HepG2 (cell line): ENCODE measurements at regions of chr17 and their contacts with region 1.

Region 1: GRCh38 chr17:8248751-8249607 is at the start of gene PFAS:
- DNase-seq: peak; percentile 87
- ATAC-seq: peak; percentile 59
- H3K4me3 ChIP-seq: peak within 1 kb of the TSS; percentile 74 to 100 (median 96)
- H3K27ac ChIP-seq: peak within 1 kb of the TSS; percentile 98
- H3K4me1 ChIP-seq: peaks cover 32% of the 10 kb centered on the region
- H3K27me3 ChIP-seq: no peaks in the 10 kb centered on the region; a peak in 1 of 5 replicates
- CTCF ChIP-seq: no peak
- EP300 ChIP-seq: peak in 1 of 2 experiments; percentile 58; a peak in 2 of 4 replicates
- POLR2A ChIP-seq: peak; percentile 88 to 89
- RAD21 ChIP-seq: no peak
- total RNA-seq, gene PFAS: 42.8 and 58.2 TPM in 2 replicates

Region 2: DNA sequence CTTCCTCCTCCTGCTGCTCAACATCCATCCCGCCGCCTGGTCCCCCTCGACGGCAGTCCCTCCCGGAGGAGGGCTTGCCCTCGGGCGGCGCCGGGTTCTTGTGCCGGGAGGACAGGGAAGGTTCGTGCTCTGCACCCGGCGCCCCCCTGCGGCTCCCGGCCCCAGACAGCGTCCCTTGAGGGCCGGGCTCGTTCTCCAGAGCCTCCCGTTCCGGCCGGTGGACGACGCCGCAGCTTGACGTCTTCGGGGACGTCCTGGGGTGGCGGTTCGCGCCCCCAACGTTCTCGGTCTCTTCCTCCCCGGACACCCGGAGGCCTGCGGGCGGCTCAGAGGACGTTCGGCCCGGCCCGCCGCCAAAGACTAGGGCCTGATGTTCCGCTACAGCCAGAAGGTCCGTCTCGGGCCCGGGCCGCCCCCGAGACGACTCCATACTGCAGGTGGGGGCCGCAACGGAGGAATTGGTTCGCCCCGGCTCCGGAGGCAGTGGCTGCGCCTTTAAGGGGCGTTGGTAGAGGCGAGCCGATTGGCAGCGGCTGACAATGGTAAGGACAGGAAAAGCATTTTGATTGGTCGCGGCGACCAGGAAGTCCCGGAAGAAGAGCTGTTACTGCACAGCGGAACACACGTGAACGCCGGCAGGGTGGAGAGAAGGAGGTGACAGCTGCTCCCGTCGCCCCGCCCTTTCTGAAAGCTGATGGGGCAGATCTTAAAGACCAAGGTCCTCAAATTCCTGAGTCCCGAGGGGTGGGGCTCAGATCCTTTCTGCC is 59.1 kb before region 1 on chr17 and contains the start of gene BORCS6:
- CTCF ChIA-PET with region 1: no interaction called
- POLR2A ChIA-PET with region 1: interaction called, 21 read pairs
- in situ Hi-C with region 1: no loop called
- intact Hi-C with region 1: no loop called
- DNase-seq: peak; percentile 95
- ATAC-seq: peak; percentile 67
- H3K4me3 ChIP-seq: peak within 1 kb of the TSS; percentile 74 to 92 (median 77)
- H3K27ac ChIP-seq: peak within 1 kb of the TSS; percentile 64
- H3K4me1 ChIP-seq: peaks cover 47% of the 10 kb centered on the region
- H3K27me3 ChIP-seq: no peaks in the 10 kb centered on the region; a peak in 1 of 5 replicates
- CTCF ChIP-seq: peak; percentile 47
- EP300 ChIP-seq: peak in 1 of 2 experiments; percentile 6; a peak in 1 of 4 replicates
- POLR2A ChIP-seq: peak; percentile 30 to 46; a peak in 2 of 4 replicates
- RAD21 ChIP-seq: peak; percentile 18; the same call in 1 of the 2 replicates
- total RNA-seq, gene BORCS6: 5.1 and 5.3 TPM in 2 replicates

Region 3: GRCh38 chr17:8237175-8237574 is 11.8 kb before region 1 on chr17:
- CTCF ChIA-PET with region 1: no interaction called
- POLR2A ChIA-PET with region 1: interaction called, 12 read pairs
- in situ Hi-C with region 1: no loop called
- intact Hi-C with region 1: no loop called
- DNase-seq: no peak
- ATAC-seq: no peak; the same call in 2 of the 3 replicates
- H3K4me3 ChIP-seq: no peak overlapping the region
- H3K27ac ChIP-seq: no peak overlapping the region
- H3K4me1 ChIP-seq: peaks cover 17% of the 10 kb centered on the region; the same call in 1 of the 2 replicates
- H3K27me3 ChIP-seq: no peaks in the 10 kb centered on the region
- CTCF ChIP-seq: no peak
- EP300 ChIP-seq: no peak
- POLR2A ChIP-seq: no peak
- RAD21 ChIP-seq: no peak

Region 4: DNA sequence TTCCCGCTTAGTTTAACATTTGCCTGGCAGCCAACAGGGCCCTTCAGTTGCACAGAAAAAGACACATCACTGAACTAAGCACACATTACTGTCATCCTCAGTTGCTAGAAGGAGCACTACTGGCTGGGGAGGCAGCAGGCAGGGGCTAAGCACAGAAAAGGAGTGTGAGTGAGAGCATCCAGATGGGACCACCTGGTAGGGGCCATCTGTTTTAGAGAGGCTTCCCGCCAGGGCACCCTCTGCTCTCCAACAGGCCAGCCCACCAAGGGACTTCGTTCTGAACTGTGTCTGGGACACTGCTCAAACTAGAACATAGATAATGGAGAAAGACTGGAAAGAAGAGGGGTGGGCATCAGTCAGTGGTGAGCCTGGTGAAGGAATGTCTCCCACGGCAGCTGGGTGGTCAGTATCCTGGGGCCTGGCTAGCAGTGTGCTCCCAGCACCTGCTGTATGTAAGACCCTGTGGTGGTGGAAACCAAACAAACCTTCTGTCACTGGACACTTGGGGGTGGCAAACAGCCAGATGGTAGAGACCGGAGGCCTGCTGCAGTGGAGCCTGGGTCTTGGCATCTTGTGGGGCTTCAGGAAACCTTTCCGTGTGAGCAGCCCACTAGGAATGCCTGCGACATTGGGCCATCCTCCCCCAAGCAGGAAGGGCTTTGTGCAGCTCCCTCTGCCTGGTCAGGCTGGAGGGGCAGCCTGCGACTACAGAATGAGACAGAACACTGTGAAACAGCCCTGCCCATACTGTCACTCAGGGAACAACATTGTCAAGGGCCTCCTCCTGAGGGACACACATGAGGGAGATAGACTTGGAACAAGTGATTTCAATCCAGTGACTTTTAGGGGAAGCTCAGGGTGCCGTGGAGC is 26.7 kb after region 1 on chr17:
- CTCF ChIA-PET with region 1: no interaction called
- POLR2A ChIA-PET with region 1: interaction called, 23 read pairs
- in situ Hi-C with region 1: no loop called
- intact Hi-C with region 1: no loop called
- DNase-seq: no peak
- ATAC-seq: peak; percentile 48
- H3K4me3 ChIP-seq: no peak overlapping the region; a peak in 1 of 6 replicates
- H3K27ac ChIP-seq: peak overlapping the region; percentile 81
- H3K4me1 ChIP-seq: peaks cover 54% of the 10 kb centered on the region
- H3K27me3 ChIP-seq: no peaks in the 10 kb centered on the region
- CTCF ChIP-seq: peak; percentile 28; the same call in 1 of the 2 replicates
- EP300 ChIP-seq: no peak
- POLR2A ChIP-seq: no peak
- RAD21 ChIP-seq: no peak

Region 5: GRCh38 chr17:8288336-8289102 is 39.5 kb after region 1 on chr17 and contains the start of gene RANGRF:
- CTCF ChIA-PET with region 1: no interaction called
- POLR2A ChIA-PET with region 1: interaction called, 20 read pairs
- in situ Hi-C with region 1: loop called (anchors 5 kb)
- intact Hi-C with region 1: no loop called
- DNase-seq: peak; percentile 77
- ATAC-seq: peak; percentile 87
- H3K4me3 ChIP-seq: peak within 1 kb of the TSS; percentile 76 to 86 (median 78)
- H3K27ac ChIP-seq: peak within 1 kb of the TSS; percentile 76
- H3K4me1 ChIP-seq: peaks cover 57% of the 10 kb centered on the region
- H3K27me3 ChIP-seq: no peaks in the 10 kb centered on the region
- CTCF ChIP-seq: no peak
- EP300 ChIP-seq: no peak
- POLR2A ChIP-seq: peak; percentile 59 to 86
- RAD21 ChIP-seq: no peak; the same call in 1 of the 2 replicates
- total RNA-seq, gene RANGRF: 18.6 and 21.3 TPM in 2 replicates

Region 6: DNA sequence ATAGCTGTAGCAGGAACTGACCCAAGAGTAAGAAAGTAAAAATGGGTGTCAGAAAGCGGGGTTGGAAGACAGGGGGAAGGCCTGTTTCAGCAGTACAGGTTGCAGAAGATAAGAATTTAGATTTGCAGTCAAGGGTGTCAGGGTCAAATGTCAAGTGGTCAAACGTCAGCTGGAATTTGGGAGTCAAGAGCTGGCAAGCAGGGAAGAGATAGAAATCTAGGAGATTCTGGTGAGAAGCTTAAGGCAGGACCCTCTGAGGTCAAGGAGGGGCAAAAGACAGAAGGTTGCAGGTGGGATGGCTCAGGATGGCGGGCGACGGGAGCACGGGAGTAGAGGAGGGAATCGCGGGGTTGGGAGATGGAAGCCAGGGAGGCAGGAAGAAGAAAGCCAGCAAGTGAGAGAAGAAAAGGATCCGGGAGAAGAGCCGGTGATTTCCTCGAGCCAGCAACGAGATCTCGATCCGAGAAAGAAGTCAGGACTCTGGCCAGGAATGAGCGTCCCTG is 45.9 kb after region 1 on chr17:
- CTCF ChIA-PET with region 1: no interaction called
- POLR2A ChIA-PET with region 1: interaction called, 41 read pairs
- in situ Hi-C with region 1: no loop called
- intact Hi-C with region 1: loop called (anchors 2 kb)
- DNase-seq: no peak
- ATAC-seq: peak; percentile 18
- H3K4me3 ChIP-seq: peak overlapping the region; percentile 60 to 79 (median 72)
- H3K27ac ChIP-seq: peak overlapping the region; percentile 88
- H3K4me1 ChIP-seq: peaks cover 45% of the 10 kb centered on the region
- H3K27me3 ChIP-seq: no peaks in the 10 kb centered on the region
- CTCF ChIP-seq: no peak
- EP300 ChIP-seq: no peak
- POLR2A ChIP-seq: peak in 1 of 2 experiments; percentile 67; a peak in 2 of 4 replicates
- RAD21 ChIP-seq: no peak

Region 7: DNA sequence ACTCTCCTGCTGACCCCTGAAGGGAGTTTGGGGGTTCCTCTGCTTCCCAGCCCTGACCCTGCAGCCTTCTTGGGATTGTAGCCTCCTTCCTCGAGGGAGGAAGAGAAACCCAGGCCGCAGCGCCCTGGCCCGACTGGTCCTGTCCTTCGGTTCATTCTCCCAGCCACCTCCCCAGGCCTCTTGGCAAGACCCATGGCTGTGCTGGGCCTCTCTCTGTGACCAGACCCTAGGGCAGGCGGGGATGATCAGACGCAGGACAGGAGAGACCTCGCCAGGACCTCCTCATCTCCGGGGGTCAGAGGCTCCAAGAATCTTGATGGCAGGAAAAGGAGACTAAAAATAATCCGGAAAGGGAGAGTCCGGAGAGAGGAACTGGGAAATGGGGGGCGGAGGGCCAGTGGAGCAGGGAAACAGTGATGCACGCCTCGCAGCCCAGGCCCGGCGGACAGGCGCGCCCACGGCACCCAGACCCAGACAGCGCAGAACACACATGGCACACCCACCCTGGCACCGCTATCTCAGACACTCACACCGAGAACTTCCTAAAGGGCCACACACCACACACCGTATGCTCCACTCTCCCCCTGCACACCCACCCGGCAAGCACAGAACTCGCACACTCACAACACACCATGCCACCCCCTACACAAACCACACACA is 62.3 kb after region 1 on chr17:
- CTCF ChIA-PET with region 1: no interaction called
- POLR2A ChIA-PET with region 1: no interaction called
- in situ Hi-C with region 1: no loop called
- intact Hi-C with region 1: no loop called
- DNase-seq: no peak
- ATAC-seq: no peak
- H3K4me3 ChIP-seq: no peak overlapping the region
- H3K27ac ChIP-seq: no peak overlapping the region
- H3K4me1 ChIP-seq: no peaks in the 10 kb centered on the region
- H3K27me3 ChIP-seq: peaks cover 15 to 65% of the 10 kb centered on the region in 2 experiments
- CTCF ChIP-seq: no peak
- EP300 ChIP-seq: no peak
- POLR2A ChIP-seq: no peak
- RAD21 ChIP-seq: no peak

Region 8: DNA sequence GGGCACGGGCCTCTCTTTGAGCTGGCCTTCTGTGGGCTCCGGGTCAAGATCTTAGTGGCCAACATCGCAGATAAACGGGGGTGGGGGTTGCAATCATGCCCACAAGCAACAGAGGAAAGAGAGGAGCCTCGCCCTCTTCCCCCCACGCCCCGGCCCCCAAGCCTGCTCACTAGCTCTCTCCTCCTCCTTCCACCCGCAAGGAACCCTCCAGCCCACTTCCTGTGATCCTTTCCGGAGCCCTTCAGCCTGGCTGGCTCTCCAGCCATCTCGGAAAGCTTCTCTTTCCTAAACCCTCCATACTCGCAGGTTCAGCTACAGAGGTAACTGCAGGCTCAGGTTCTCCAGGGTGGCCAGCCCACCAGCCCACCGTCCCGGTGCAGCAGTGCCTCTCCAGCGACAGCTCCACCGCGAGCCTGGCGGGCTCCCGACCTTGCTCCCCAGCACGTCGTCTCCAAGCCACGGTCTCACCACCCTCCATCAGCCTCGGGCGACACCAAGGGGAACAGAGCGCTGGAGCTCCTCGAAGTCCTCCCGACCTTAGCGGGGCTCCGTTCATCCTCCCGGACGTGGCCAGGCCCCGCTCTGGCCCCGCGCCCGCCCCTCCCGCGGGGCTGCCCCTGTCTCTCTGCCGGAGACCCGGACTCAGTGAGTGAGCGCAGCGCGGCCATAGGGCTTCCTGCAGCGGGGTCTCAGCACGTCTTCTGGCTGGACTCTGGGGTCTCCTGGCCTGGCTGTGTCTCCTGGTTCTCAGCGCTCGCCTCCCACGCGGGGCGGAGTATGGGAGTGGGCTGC is 77.7 kb after region 1 on chr17:
- CTCF ChIA-PET with region 1: no interaction called
- POLR2A ChIA-PET with region 1: no interaction called
- in situ Hi-C with region 1: no loop called
- intact Hi-C with region 1: no loop called
- DNase-seq: no peak
- ATAC-seq: peak; percentile 82
- H3K4me3 ChIP-seq: peak overlapping the region; percentile 47 to 75 (median 48); a peak in 5 of 6 replicates
- H3K27ac ChIP-seq: no peak overlapping the region
- H3K4me1 ChIP-seq: peaks cover 29% of the 10 kb centered on the region
- H3K27me3 ChIP-seq: peaks cover 2 to 34% of the 10 kb centered on the region in 2 experiments; a peak in 4 of 5 replicates
- CTCF ChIP-seq: peak; percentile 36
- EP300 ChIP-seq: no peak
- POLR2A ChIP-seq: no peak
- RAD21 ChIP-seq: no peak